Heart right ventricle (tissue), 16 donors: ENCODE measurements at regions of chr17 and their contacts with region 1.

Region 1: DNA sequence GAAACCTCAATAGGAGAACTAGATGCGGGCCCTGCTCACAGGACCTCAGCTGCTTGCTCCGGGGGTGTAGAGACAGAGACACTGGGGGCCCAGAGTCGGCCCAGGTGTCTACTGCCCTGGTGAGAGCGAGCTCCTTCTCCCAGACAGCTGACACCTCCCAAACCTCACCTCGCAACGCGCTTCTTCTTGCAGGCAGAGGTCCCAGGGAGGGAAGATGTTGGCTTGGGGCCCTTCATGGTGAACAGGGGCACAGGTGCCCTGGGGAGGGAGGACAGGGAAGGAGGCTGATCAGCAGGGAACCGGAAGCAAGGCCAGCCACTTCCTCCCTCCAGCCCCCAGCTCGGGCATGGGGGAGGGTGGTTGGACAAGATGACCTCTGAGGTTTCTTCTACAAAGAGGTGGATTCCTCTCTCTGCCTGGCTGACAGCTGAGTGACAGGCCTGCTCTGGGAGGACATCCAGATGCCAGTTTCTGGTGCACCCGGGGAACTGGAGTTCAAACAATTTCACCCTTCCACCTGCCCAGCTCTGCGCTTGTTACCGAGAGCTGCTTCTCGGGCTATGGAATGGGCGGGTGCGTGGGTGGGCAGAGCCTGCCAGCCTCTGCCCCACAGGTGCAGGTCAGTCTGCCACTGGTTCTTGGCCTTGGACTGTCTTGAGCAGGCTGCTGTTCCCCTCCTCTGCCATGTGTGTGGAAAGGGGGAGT is 11.7 kb upstream of the GFAP start:
- DNase-seq: no peak
- ATAC-seq: peak in 1 of 8 donors; percentile 22
- H3K4me3 ChIP-seq: no peak overlapping the region
- H3K27ac ChIP-seq: no peak overlapping the region
- H3K4me1 ChIP-seq: peaks cover 0 to 13% (median 0%) of the 10 kb centered on the region in 9 donors
- H3K27me3 ChIP-seq: no peaks in the 10 kb centered on the region
- CTCF ChIP-seq: no peak

Region 2: GRCh38 chr17:45001310-45001709 is 74.3 kb after region 1 on chr17:
- intact Hi-C with region 1: loop called in 1 of 10 experiments (anchors 5 kb)
- DNase-seq: no peak
- ATAC-seq: no peak
- H3K4me3 ChIP-seq: no peak overlapping the region
- H3K27ac ChIP-seq: no peak overlapping the region
- H3K4me1 ChIP-seq: peaks cover 0 to 10% (median 5%) of the 10 kb centered on the region in 9 donors
- H3K27me3 ChIP-seq: peaks cover 0 to 4% (median 0%) of the 10 kb centered on the region in 7 donors
- CTCF ChIP-seq: no peak